GM13977 (cell line): ENCODE measurements at regions of chr6 and their contacts with region 1.

Region 1: DNA sequence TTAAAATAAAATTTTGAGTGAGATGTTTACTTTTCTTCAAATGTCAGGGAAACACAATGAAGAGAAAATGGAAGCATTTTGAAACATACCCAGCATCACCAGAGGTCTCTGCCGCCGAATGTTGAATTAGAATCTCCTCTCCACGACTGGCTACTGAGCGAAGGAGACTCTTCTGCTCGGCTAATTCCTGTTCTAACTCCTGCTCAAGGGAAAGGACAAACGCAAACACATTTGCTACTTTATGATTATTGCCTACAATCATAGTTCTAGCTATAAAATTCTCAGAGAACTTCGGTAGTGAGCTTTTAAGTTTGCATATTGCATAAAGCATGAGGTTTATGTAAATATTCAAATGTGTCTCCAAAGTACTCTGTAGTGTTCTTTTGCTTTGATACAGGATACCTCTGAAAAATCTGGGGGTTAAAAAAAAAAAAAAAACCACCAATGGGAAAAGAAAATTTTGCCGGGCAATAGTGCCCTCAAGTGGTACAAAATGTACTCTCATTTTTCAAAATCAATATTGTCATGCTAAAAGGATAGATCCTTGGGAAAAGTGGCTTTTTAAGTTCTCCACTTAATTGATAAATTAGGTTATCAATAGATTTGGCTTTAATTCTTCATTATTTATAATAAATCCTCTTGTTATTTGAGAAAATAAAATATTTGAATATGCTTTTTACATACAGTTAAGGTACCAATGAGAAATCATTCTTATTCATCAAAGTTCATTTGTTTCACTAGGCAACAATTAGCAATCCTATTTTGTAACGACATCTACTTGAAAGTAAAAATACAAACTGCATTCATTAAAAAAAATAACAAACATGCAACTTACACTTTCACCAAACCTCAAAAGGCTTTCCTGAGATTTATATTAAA is 369.0 kb downstream of the SYNE1 start:
- DNase-seq: peak; percentile 22
- CTCF ChIP-seq: peak; percentile 60

Region 2: DNA sequence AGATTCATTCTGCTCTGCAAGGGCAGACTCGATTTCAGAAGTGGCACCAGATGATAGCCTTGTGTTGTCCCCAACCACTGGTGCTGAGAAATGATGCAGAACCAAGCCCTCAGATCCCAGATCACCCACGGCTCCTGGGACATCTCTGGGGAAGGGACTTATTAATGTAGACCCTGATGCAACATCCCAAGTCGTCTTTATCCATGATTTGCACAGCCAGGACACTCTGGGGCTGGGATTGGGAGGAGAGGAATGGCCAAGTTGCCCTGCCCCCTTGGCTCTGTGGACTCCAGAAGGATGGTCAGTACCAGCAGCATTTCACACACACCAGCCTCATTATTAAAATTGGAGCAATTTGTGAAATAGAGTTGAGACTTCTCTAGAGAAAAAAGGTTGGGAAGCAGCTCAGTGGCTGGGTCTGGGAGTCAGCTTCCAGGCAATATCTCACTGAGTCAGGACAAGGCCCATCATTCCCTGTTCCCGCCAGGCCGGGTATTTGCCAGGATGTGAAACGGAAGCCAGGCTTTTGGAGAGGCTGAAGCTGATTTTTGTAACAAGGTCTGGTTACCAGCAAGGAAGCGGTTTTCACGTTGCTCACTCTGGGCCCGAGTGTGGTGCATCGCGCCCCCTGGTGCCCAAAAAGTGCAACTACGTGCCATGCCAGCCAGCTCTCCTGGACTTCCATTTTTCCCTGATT is 944.3 kb before region 1 on chr6:
- in situ Hi-C with region 1: no loop called
- DNase-seq: peak; percentile 79
- CTCF ChIP-seq: peak; percentile 96

Region 3: DNA sequence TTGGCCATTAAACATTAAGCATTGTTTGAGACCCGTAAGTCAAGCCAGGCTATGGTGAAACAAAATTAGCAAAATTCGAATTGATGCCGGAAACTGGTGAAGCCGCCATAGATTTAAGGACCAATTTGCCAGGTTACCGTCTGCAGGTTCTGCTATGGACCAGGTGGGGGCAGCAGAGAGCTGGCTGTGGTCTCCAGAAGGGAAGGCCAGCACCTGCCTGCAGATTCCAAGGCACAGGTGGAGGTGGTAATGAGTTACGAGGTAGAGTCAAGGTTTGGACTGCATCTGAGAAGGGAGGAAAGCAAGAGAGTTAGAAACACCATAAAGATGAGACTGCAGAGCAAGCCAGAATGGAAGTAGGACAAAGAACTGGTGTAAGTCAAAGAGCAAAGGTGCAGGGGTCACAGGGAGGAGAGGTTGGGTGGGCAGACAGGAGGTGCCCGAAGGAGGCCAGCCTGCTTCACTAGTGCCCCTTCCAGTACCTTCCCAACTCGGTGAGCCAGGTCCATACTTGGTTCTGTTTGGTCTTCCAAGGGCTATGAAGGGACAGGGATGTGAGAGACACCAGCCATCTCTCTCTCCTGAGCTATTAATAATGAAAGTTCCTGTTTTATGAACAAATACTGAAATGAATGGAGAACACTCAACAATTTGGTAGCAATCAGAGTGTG is 592.3 kb before region 1 on chr6:
- in situ Hi-C with region 1: loop called (anchors 25 kb)
- DNase-seq: peak; percentile 75
- CTCF ChIP-seq: peak; percentile 92

Region 4: GRCh38 chr6:151765444-151765886 is 502.7 kb before region 1 on chr6:
- in situ Hi-C with region 1: loop called (anchors 25 kb)
- DNase-seq: peak; percentile 66
- CTCF ChIP-seq: peak; percentile 58

Region 5: GRCh38 chr6:152039217-152039616 is 229.0 kb before region 1 on chr6:
- in situ Hi-C with region 1: no loop called
- DNase-seq: no peak
- CTCF ChIP-seq: no peak

Region 6: GRCh38 chr6:152489149-152489548 is 220.9 kb after region 1 on chr6:
- in situ Hi-C with region 1: no loop called
- DNase-seq: no peak
- CTCF ChIP-seq: no peak

Region 7: GRCh38 chr6:152680879-152681517 is 412.8 kb after region 1 on chr6:
- in situ Hi-C with region 1: no loop called
- DNase-seq: no peak
- CTCF ChIP-seq: no peak